SK-N-SH (cell line): ENCODE measurements at regions of chr20 and their contacts with region 1.

Region 1: GRCh38 chr20:51688600-51689244 is 79.5 kb downstream of the ATP9A start:
- DNase-seq: peak; percentile 65
- H3K4me3 ChIP-seq: no peak overlapping the region
- H3K27ac ChIP-seq: no peak overlapping the region; a peak in 1 of 4 replicates
- H3K4me1 ChIP-seq: peaks cover 0 to 6% of the 10 kb centered on the region in 2 experiments; a peak in 1 of 4 replicates
- H3K27me3 ChIP-seq: no peaks in the 10 kb centered on the region
- CTCF ChIP-seq: no peak
- EP300 ChIP-seq: no peak
- RAD21 ChIP-seq: no peak

Region 2: GRCh38 chr20:51703400-51704287 is 14.9 kb after region 1 on chr20:
- CTCF ChIA-PET with region 1: interaction called, 20 read pairs
- POLR2A ChIA-PET with region 1: no interaction called
- DNase-seq: peak; percentile 51
- H3K4me3 ChIP-seq: no peak overlapping the region
- H3K27ac ChIP-seq: peak overlapping the region in 1 of 2 experiments; percentile 39; a peak in 2 of 4 replicates
- H3K4me1 ChIP-seq: peaks cover 5 to 7% of the 10 kb centered on the region in 2 experiments; a peak in 3 of 4 replicates
- H3K27me3 ChIP-seq: no peaks in the 10 kb centered on the region
- CTCF ChIP-seq: no peak
- EP300 ChIP-seq: peak in 1 of 2 experiments; percentile 78; a peak in 2 of 4 replicates
- RAD21 ChIP-seq: no peak

Region 3: GRCh38 chr20:51767010-51767558 is 78.4 kb after region 1 on chr20:
- CTCF ChIA-PET with region 1: no interaction called
- POLR2A ChIA-PET with region 1: no interaction called
- DNase-seq: peak; percentile 87
- H3K4me3 ChIP-seq: peak overlapping the region; percentile 65 to 98
- H3K27ac ChIP-seq: peak overlapping the region in 1 of 2 experiments; percentile 24; a peak in 1 of 4 replicates
- H3K4me1 ChIP-seq: no peaks in the 10 kb centered on the region; a peak in 1 of 4 replicates
- H3K27me3 ChIP-seq: no peaks in the 10 kb centered on the region
- CTCF ChIP-seq: no peak
- EP300 ChIP-seq: no peak
- RAD21 ChIP-seq: no peak